SK-N-SH (cell line): ENCODE measurements at regions of chr19 and their contacts with region 1.

Region 1: DNA sequence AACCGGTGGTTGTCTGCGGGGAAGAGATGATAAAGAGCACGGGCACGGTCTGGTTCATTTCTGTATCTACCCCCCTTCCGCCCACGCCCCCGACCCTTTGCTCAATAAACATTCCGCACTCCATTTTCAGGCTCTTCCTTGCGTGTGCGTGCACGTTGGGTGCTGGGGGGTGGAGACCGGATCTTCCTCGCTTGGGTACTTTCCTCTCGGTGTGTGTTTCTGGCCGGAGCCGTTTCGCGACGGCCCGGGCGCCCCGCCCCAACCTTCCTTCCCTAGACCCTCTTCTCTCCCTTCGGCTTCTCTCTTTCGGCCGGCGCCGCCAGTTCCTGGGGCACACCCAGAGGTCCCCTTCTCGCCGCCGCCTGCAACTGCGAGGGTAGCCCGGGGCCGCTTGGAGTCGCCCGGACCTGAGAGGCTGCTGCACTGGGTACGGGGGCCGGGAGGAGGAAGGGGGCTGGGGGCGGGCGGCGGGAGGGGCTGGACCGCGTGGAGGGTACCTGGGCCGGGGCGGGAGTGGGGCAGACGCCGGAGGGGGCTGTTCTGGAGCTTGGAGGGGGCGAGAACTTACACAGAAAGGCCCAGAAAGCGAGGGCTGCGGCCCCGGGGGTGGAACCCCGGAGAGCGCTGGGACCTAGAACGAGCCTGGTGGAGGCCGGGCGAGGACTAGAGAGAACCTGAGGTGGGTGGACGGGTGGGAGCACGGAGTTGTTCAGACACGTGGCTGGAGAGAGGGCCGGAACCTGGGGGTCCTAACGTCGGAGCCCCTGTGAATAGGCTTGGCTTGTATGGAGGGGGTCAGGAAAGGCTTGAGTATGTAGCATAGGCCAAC is at the start of gene ZNF581:
- DNase-seq: peak; percentile 90
- H3K4me3 ChIP-seq: peak within 1 kb of the TSS; percentile 53 to 81
- H3K27ac ChIP-seq: peak within 1 kb of the TSS; percentile 85 to 88
- H3K4me1 ChIP-seq: peaks cover 21 to 44% of the 10 kb centered on the region in 2 experiments; a peak in 2 of 4 replicates
- H3K27me3 ChIP-seq: no peaks in the 10 kb centered on the region
- CTCF ChIP-seq: no peak
- EP300 ChIP-seq: peak in 1 of 2 experiments; percentile 34; a peak in 1 of 4 replicates
- RAD21 ChIP-seq: no peak
- polyA plus RNA-seq, gene ZNF581: 24.2 and 24.7 TPM in 2 replicates

Region 2: GRCh38 chr19:55624109-55625003 is 19.2 kb before region 1 on chr19 and contains the start of gene ZNF784:
- CTCF ChIA-PET with region 1: interaction called, 11 read pairs
- POLR2A ChIA-PET with region 1: interaction called, 4 read pairs
- DNase-seq: peak; percentile 97
- H3K4me3 ChIP-seq: peak within 1 kb of the TSS; percentile 52 to 74
- H3K27ac ChIP-seq: peak within 1 kb of the TSS; percentile 87 to 90
- H3K4me1 ChIP-seq: peaks cover 0 to 2% of the 10 kb centered on the region in 2 experiments; a peak in 1 of 4 replicates
- H3K27me3 ChIP-seq: no peaks in the 10 kb centered on the region
- CTCF ChIP-seq: no peak
- EP300 ChIP-seq: no peak
- RAD21 ChIP-seq: no peak
- polyA plus RNA-seq, gene ZNF784: 5.0 and 5.5 TPM in 2 replicates

Region 3: DNA sequence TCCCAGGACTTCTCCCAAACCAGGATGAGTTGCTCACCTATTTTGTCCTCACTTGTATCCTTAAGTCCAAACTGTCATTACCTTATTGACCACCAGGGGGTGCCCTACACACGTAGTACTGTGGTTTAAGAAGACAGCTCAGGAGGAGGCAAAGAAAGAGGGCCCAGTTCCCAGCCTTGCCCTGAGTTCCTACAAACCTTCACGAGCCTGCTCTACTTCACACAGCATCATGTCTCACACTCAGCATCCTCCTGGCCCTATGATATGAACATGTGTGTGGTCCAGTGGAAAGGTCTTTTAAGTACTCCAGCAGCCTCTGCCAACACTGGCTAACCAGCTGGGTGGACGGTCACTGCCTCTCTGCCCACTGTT is 11.1 kb before region 1 on chr19:
- CTCF ChIA-PET with region 1: interaction called, 30 read pairs
- POLR2A ChIA-PET with region 1: no interaction called
- DNase-seq: peak; percentile 62
- H3K4me3 ChIP-seq: peak overlapping the region in 1 of 2 experiments; percentile 30; a peak in 1 of 4 replicates
- H3K27ac ChIP-seq: peak overlapping the region in 1 of 2 experiments; percentile 26; a peak in 1 of 4 replicates
- H3K4me1 ChIP-seq: peaks cover 0 to 14% of the 10 kb centered on the region in 2 experiments; a peak in 1 of 4 replicates
- H3K27me3 ChIP-seq: no peaks in the 10 kb centered on the region
- CTCF ChIP-seq: peak; percentile 83
- EP300 ChIP-seq: no peak
- RAD21 ChIP-seq: peak; percentile 82

Region 4: DNA sequence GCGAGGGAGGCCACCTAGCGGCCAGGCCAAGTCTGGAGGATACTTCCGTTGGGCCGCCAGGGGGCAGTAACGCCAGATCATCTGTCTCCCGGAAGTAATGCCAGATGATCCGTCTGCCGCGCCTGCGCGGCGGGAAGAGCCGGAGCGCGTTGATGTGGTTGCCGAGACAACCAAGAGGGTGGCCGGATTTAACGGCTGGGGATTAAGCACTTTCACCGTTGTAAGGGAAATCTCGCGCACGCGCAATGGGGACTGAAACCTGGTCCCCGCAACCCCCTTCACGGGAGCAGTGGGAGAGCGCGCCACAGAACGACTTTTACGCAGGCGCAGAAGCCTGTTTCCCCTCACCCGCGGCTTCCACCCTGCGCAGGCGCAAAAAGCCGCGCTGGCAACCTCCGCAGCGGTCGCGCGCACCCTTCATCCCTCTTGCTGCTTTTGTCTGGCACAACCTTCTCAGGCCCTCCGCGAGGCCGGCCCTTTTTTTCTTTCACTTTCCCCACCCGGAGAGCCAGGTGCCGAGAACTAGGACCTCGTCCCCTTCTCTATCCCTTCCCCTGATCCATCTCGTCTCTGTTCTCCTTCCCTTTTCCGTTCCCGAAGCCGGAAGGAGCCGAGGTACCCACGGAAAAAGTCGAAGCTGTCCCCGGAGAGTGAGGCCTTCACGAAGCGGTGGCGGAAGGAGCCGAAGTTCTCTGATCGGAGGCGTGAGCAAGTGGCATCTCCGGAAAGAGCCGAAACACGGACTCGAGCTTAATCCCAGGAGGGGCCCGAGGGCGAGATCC is 10.4 kb after region 1 on chr19:
- CTCF ChIA-PET with region 1: interaction called, 28 read pairs
- POLR2A ChIA-PET with region 1: interaction called, 4 read pairs
- DNase-seq: peak; percentile 92
- H3K4me3 ChIP-seq: peak overlapping the region; percentile 92 to 96
- H3K27ac ChIP-seq: peak overlapping the region; percentile 99 to 100
- H3K4me1 ChIP-seq: peaks cover 14 to 33% of the 10 kb centered on the region in 2 experiments; a peak in 3 of 4 replicates
- H3K27me3 ChIP-seq: no peaks in the 10 kb centered on the region
- CTCF ChIP-seq: peak; percentile 99
- EP300 ChIP-seq: no peak
- RAD21 ChIP-seq: peak; percentile 61